ENCODE measurements at regions of chr20 and their contacts with region 1.

Region 1: GRCh38 chr20:57440678-57441520 is 49.7 kb downstream of the RBM38 start:
- DNase-seq: peak; percentile 72 to 95
- H3K4me3 ChIP-seq: no peak overlapping the region
- H3K27ac ChIP-seq: peak overlapping the region; percentile 93 to 94
- H3K4me1 ChIP-seq: peaks cover 33 to 78% of the 10 kb centered on the region in 2 donors
- H3K27me3 ChIP-seq: no peaks in the 10 kb centered on the region
- CTCF ChIP-seq: no peak

Region 2: DNA sequence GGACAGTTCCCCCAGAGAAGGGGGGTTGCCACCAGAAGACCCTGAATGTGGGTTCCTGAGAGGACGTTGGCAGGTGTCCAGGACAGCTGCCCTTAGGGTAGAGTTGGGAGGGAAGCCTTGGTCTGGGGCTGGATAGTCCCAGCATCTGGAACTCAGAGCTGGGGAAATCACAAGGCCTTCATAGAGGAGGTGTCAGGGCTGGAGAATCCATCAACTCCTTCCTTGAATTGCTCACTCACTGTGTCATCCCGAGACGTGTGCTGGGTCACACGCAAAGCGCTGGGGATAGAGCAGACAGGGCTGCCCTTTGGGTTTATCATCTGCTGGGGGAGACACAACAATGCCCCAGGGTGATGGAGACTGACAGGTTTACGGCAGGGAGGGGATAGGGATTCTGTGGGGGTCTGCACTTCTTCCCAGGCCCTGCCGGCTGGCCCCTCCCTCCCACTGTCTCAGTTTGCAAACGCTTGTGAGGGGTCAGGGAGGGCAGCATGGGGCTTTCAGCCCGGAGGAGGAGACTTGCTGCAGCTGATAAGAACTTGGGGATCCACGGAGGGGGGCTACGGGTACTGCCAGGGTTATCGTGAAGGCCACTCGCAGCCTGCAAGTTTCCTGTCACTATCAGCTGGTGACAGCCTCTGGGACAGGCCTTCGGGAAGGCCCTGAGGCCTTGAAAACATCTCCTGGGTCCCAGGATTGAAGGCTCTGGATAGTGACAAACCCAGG is 31.1 kb before region 1 on chr20:
- intact Hi-C with region 1: loop called (anchors 2 kb)
- DNase-seq: no peak
- H3K4me3 ChIP-seq: peak overlapping the region in 1 of 2 donors; percentile 33
- H3K27ac ChIP-seq: no peak overlapping the region
- H3K4me1 ChIP-seq: peaks cover 16 to 24% of the 10 kb centered on the region in 2 donors
- H3K27me3 ChIP-seq: no peaks in the 10 kb centered on the region
- CTCF ChIP-seq: no peak

Region 3: GRCh38 chr20:57493091-57493615 is 52.3 kb after region 1 on chr20:
- intact Hi-C with region 1: loop called (anchors 5 kb)
- DNase-seq: peak in 1 of 2 donors; percentile 55
- H3K4me3 ChIP-seq: no peak overlapping the region
- H3K27ac ChIP-seq: no peak overlapping the region
- H3K4me1 ChIP-seq: peaks cover 4 to 9% of the 10 kb centered on the region in 2 donors
- H3K27me3 ChIP-seq: no peaks in the 10 kb centered on the region
- CTCF ChIP-seq: no peak

Region 4: DNA sequence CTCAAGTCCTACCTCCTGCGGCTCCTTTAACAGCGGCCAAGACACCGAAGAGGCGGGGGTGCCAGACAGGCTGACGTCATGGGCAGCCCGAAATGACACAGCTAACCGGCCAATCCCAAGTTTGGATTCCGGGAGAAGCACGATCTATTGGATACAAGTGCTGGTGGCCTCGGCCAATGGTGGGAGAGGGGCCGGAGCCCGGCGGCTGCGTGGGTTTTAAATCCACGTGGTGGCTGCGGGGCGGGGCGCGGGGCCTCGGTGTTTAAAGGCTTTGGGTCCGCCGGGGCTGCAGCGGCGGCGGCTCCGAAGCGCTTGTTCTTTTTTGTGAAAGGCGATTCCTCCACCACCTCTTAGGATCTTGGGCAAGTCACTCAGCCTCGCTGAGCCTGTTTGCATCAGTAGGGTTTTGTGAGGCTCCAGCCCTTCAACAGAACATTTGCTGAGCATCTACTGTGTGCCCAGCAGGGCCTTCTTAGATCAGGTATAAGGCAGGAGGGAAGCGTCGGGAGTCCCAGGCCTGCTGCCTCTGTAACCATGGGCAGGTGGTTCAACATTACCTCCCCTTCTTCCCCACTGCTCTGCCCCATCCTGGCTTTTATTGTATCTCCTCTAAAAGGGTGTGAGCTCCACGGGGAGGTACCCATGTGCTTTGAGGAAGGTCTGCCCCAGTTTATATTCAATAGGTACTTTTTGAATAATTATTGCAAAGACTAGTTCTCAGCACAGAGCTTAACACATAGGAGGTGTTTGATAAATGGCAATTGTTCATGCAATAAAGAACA is 277.8 kb after region 1 on chr20:
- intact Hi-C with region 1: loop called (anchors 10 kb)
- DNase-seq: peak; percentile 95 to 99
- H3K4me3 ChIP-seq: peak overlapping the region; percentile 38 to 44
- H3K27ac ChIP-seq: peak overlapping the region; percentile 52 to 53
- H3K4me1 ChIP-seq: peaks cover 29 to 53% of the 10 kb centered on the region in 2 donors
- H3K27me3 ChIP-seq: no peaks in the 10 kb centered on the region
- CTCF ChIP-seq: no peak

Region 5: GRCh38 chr20:57748601-57749130 is 307.8 kb after region 1 on chr20:
- intact Hi-C with region 1: loop called (anchors 10 kb)
- DNase-seq: peak; percentile 85 to 94
- H3K4me3 ChIP-seq: peak overlapping the region; percentile 39 to 50
- H3K27ac ChIP-seq: peak overlapping the region; percentile 94 to 99
- H3K4me1 ChIP-seq: peaks cover 6 to 25% of the 10 kb centered on the region in 2 donors
- H3K27me3 ChIP-seq: no peaks in the 10 kb centered on the region
- CTCF ChIP-seq: no peak

Measured in ascending aorta (tissue), 2 donors.